RWPE1 (cell line): ENCODE measurements at regions of chr12 and their contacts with region 1.

Region 1: DNA sequence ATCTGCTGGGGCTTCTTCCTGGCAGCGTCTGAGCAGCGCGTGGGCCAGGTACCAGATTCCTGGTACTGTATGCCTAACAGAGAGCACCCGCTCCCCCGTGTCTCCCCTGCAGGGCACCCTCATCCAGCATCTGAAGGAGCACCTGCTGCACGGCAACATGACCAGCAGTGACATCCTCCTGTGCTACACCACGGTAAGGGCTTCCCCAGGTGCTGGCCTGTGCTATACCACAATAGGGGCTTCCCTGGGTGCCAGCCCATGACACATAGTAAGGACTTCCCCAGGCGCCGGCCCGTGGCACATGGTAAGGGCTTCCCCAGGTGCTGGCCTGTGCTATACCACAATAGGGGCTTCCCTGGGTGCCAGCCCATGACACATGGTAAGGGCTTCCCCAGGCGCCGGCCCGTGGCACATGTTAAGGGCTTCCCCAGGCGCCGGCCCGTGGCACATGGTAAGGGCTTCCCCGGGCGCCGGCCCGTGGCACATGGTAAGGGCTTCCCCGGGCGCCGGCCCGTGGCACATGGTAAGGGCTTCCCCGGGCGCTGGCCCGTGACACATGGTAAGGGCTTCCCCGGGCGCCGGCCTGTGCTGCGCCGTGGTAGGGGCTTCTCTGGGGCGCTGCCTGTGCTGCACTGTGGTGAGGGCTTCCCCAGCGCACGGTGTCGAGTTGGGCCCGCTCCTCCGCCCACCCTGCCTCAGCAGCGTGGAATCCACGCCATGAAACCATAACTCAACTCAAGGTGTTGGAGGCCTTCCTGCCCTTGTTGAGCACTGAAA is 49.3 kb downstream of the AACS start:
- DNase-seq: no peak
- H3K27ac ChIP-seq: no peak overlapping the region
- CTCF ChIP-seq: no peak

Region 2: GRCh38 chr12:124906606-124907261 is 207.8 kb before region 1 on chr12:
- CTCF ChIA-PET with region 1: no interaction called
- POLR2A ChIA-PET with region 1: interaction called, 10 read pairs
- DNase-seq: peak; percentile 79
- H3K27ac ChIP-seq: no peak overlapping the region
- CTCF ChIP-seq: peak; percentile 98

Region 3: DNA sequence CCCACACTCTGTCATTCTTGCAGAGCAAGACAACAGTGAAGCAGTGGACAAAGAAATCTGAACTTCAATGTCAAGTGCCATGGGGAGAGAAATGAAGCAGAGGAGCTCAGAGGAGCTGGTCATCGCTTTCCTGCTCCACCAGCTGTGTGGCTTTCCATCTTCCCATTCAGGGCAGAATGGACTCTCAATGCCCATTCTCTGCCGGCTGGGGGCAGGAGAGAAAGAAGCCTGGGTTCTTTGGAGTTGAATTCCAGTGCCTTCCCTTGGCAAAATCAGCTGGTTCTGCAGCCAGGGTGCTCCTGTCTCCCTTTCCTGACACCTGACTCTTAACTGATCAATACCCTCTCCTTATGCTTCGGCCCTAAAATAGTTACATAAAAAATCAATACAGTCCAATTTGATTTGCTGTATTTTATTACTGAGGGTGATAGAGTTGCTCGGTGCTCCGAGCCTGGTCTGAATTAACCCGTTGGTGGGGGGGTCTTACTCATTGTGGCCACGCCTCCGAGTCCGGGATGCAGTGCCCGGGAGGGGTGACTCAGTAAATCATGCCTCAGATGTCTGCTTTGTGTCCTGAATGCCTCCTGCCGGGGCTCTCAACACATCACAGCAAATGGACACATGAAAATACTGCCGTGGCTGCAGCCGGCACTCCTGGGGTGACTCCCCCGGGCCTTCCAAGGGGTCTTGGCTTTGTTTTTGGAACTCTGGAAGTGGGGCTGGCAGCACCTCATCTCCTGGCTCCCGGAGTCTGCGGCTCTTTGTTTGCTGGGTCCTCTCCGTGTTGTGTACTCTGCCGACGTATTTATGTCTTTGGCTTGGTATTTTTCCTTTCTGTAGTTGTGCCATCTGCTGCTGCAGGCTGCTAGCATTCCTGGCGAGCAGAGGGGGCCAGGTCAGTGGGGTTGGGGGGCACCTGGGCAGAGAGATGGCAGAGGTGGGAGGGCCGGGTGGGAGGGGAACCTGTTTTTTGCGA is 79.5 kb after region 1 on chr12:
- CTCF ChIA-PET with region 1: no interaction called
- POLR2A ChIA-PET with region 1: no interaction called
- DNase-seq: peak; percentile 47
- H3K27ac ChIP-seq: no peak overlapping the region
- CTCF ChIP-seq: no peak